Right ventricle myocardium inferior (tissue), 1 donor: ENCODE measurements at regions of chr4 and their contacts with region 1.

Region 1: DNA sequence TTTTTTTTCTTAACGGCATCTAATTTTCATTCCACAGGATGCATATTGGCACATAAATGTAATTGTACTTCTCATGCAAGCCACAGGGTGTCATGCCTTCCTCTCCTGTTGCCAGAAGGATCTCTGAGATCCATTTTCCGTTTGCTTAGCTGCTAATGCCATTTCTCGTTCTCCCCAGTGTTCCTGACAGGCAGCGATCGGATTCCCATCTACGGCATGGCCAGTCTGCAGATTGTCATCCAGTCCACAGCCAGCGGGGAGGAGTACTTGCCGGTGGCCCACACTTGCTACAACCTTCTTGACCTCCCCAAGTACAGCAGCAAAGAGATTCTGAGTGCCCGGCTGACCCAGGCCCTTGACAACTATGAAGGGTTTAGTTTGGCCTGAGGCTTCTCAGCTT is 8.9 kb upstream of the NAP1L5 start:
- DNase-seq: no peak
- ATAC-seq: peak; percentile 87

Region 2: GRCh38 chr4:88352062-88352740 is 354.4 kb before region 1 on chr4:
- intact Hi-C with region 1: no loop called
- DNase-seq: no peak
- ATAC-seq: no peak

Region 3: GRCh38 chr4:88753658-88754571 is 47.3 kb after region 1 on chr4:
- intact Hi-C with region 1: loop called (anchors 1 kb)
- DNase-seq: no peak
- ATAC-seq: no peak

Region 4: DNA sequence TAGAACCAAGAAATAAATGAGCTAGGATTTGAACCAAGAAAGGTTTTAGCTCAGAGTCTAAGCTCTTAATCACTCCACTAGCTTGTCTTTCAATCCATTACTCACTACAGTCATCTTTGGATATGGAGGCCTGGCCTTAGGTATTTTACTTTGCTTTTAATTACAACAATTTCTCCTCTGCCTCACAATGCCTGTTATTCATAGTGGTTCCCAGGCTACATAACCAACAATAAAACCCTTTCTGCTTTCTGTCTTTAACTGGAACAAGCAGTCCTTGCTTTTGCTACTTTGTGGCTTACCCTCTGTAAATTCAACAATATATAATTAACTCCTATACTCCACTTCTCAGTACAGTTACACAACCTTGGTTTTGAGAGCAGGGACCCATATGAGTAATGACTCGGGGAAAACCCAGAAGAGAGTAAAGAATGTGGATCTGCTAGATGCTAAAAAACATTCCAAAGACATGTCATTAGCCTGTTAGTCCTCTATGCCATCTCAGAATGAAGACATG is 85.8 kb after region 1 on chr4:
- intact Hi-C with region 1: loop called (anchors 5 kb)
- DNase-seq: no peak
- ATAC-seq: no peak

Region 5: GRCh38 chr4:89024051-89024675 is 317.6 kb after region 1 on chr4:
- intact Hi-C with region 1: loop called (anchors 2 kb)
- DNase-seq: no peak
- ATAC-seq: peak; percentile 96